Mammary epithelial cell (primary cell): ENCODE measurements at regions of chr2 and their contacts with region 1.

Region 1: DNA sequence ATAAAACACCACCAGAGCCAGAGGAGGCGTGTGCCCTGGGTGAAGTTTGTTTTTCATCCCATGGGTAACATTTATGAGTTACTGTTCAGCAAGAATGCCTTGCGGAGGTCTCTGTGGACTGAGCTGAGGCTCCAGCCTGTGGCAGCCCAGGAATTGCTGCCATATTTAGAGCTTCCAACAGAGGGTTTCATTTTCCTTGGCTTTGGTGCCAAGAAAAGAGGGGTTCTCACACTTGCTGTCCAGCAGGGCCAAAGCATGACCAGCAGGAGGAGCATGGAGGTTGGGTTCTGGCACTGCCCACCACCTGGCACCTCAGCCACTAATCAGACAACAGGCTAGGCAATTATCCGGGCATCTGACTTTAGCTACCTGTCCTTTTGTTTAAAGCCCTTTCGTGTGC is 36.7 kb downstream of the EPAS1 start:
- DNase-seq: no peak
- H3K4me3 ChIP-seq: no peak overlapping the region
- H3K27ac ChIP-seq: peak overlapping the region; percentile 93
- H3K4me1 ChIP-seq: peaks cover 90% of the 10 kb centered on the region
- H3K27me3 ChIP-seq: no peaks in the 10 kb centered on the region
- CTCF ChIP-seq: peak; percentile 3 to 22

Region 2: DNA sequence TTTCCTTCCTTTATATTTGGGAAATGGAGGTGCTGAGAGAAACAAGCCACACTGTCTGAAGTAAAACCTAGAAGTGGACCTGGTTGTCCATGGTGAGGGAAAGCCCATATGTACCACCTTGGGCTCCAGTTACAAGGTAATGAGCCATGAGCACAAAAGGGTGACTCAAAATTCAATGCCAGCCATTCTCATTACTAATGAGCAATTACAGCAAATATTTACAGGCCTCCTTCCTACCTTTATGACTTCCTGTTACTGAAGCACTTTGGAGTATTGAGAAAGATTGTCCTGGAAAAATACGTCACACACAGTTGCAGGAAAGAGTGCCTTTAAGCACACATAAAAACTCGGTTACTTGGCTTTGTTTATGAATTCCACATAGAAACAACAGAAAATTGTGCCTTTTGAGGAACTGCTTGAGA is 27.6 kb before region 1 on chr2:
- CTCF ChIA-PET with region 1: no interaction called
- dilution Hi-C with region 1: no loop called
- in situ Hi-C with region 1: no loop called
- intact Hi-C with region 1: loop called (anchors 1 kb)
- DNase-seq: peak; percentile 91
- H3K4me3 ChIP-seq: no peak overlapping the region
- H3K27ac ChIP-seq: peak overlapping the region; percentile 75
- H3K4me1 ChIP-seq: peaks cover 55% of the 10 kb centered on the region
- H3K27me3 ChIP-seq: no peaks in the 10 kb centered on the region
- CTCF ChIP-seq: no peak

Region 3: DNA sequence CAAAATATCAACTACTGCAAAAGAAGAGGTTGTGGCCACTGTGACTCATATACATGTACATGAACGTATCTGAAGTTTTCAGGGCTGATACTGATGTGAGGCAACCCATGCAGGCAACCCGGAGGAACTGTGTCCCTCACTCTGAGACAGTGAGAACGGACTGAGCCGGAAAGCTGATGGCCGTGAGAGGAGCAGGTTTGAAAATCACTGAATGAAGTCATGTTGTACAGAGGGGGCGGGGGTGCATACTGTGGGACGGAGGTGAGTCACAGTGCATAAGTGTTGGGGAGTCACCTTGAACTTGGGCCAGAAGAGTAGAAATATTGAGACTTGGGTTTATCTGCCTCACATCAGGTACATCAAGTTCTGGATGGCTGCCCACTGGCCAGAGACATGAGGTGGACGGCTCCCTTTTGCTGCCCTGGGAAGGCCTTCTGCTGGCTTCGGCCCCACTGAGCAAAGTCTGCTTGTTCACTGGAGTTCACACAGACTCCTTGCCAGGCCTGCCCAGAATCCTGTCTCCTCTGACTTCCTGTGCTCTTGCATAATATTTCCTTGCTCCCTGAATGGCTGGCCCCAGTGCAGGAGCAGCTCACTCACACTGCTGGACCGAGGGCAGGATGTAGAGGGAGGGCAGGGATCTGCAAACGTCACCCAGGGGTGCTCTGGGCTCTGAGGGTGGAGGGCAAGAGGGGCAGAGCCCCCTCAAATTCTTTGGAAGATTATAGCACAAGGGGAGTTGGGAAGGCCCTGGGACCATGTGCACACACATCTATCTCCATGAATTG is 18.6 kb before region 1 on chr2:
- CTCF ChIA-PET with region 1: no interaction called
- dilution Hi-C with region 1: no loop called
- in situ Hi-C with region 1: no loop called
- intact Hi-C with region 1: loop called (anchors 1 kb)
- DNase-seq: peak; percentile 98
- H3K4me3 ChIP-seq: no peak overlapping the region
- H3K27ac ChIP-seq: peak overlapping the region; percentile 61
- H3K4me1 ChIP-seq: peaks cover 74% of the 10 kb centered on the region
- H3K27me3 ChIP-seq: no peaks in the 10 kb centered on the region
- CTCF ChIP-seq: no peak

Region 4: GRCh38 chr2:46915811-46916630 is 582.1 kb after region 1 on chr2:
- CTCF ChIA-PET with region 1: no interaction called
- dilution Hi-C with region 1: no loop called
- in situ Hi-C with region 1: no loop called
- intact Hi-C with region 1: no loop called
- DNase-seq: peak; percentile 87
- H3K4me3 ChIP-seq: peak overlapping the region; percentile 67 to 97 (median 74)
- H3K27ac ChIP-seq: peak overlapping the region; percentile 92
- H3K4me1 ChIP-seq: peaks cover 26% of the 10 kb centered on the region
- H3K27me3 ChIP-seq: no peaks in the 10 kb centered on the region
- CTCF ChIP-seq: no peak

Region 5: GRCh38 chr2:47029737-47030524 is 696.0 kb after region 1 on chr2:
- CTCF ChIA-PET with region 1: no interaction called
- dilution Hi-C with region 1: no loop called
- in situ Hi-C with region 1: no loop called
- intact Hi-C with region 1: no loop called
- DNase-seq: peak; percentile 34
- H3K4me3 ChIP-seq: no peak overlapping the region
- H3K27ac ChIP-seq: no peak overlapping the region
- H3K4me1 ChIP-seq: peaks cover 43% of the 10 kb centered on the region
- H3K27me3 ChIP-seq: no peaks in the 10 kb centered on the region
- CTCF ChIP-seq: no peak